Left colon (tissue), 2 donors: ENCODE measurements at regions of chr2 and their contacts with region 1.

Region 1: GRCh38 chr2:128321784-128322714 is 3.4 kb upstream of the HS6ST1 start:
- DNase-seq: peak; percentile 68 to 88
- ATAC-seq: peak; percentile 66

Region 2: DNA sequence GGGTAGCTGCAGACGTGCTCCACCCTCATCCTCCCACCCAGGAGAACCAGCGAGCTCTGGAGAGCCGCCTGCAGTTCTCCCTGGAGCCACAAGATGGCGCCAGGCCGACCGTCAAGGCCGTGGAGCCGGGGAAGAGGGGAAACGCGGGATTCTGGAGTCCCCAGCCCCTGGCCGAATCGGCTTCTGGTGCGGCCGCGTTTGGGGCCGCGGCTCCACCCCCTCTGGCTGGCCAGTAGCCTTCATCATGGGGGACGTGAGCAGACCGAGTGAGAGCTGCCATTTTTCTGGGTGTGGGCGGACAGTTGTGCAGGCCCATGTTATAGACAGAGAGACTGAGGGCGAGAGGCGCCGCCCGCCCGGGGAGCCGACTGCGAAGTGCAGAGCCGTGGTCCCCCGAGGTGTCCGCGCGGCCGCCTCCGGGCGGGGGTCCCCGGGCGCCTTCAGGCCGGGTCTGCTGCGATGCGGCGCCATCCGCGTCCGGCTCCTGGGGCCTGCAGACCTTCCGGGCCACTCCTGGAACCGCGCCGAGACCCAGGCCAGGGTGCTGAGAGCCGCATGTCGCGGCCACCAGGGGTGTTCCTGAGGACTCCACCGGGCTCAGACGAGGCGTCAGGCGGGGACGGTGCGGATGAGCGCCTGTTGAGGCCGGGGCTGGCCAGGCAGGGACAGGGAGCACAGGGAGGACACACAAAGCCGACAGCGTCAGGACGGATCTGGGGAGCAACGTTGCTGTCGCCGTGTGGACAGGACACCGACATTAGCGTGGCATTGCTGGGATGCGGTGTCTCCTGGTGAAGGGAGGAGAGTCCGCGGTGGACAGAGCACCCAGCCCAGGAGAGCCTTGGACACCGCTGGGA is 414.9 kb after region 1 on chr2:
- intact Hi-C with region 1: loop called in 1 of 2 experiments (anchors 10 kb)
- DNase-seq: peak in 1 of 2 donors; percentile 74
- ATAC-seq: peak; percentile 58

Region 3: GRCh38 chr2:128808462-128809258 is 486.6 kb after region 1 on chr2:
- intact Hi-C with region 1: no loop called
- DNase-seq: no peak
- ATAC-seq: no peak